ENCODE measurements at regions of chr10 and their contacts with region 1.

Region 1: DNA sequence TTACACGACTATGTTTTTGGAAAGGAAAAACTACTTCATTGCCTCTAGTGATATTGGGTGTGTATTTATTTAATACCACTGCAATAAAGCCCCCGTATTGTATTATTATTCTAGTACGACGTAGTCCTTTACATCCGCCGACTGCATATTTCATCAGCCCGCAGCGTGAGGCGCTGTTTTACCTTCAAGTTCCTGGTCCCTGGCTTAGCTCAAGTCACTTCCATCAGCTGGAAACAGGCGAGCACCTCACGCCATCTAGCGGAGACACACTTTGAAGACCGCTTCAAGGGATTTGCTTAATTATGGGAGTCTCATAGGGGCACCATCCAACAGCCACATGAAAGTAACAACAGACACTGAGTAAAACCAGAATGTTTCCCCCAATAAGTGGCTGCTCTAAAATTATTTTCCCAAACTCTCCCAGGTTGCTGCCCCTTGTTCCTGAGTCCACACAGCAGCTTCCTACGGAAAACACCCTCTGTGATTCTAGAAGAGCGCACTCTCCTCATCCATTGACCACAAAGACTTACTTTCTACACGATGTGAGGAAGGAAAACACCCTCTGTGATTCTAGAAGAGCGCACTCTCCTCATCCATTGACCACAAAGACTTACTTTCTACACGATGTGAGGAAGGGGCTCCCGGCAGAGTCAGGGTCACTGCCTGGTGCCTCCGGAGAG is 15.7 kb upstream of the ITIH2 start:
- DNase-seq: peak; percentile 55 to 89 (median 72)
- ATAC-seq: peak; percentile 94
- H3K4me3 ChIP-seq: no peak overlapping the region
- H3K4me3 Mint-ChIP-seq: no peak overlapping the region
- H3K27ac ChIP-seq: no peak overlapping the region
- H3K27ac Mint-ChIP-seq: no peak overlapping the region
- H3K4me1 ChIP-seq: no peaks in the 10 kb centered on the region
- H3K4me1 Mint-ChIP-seq: peaks cover 4% of the 10 kb centered on the region
- H3K27me3 ChIP-seq: no peaks in the 10 kb centered on the region
- H3K27me3 Mint-ChIP-seq: peaks cover 4% of the 10 kb centered on the region
- CTCF ChIP-seq: peak; percentile 69

Region 2: GRCh38 chr10:7121154-7121810 is 566.1 kb before region 1 on chr10:
- CTCF ChIA-PET with region 1: interaction called, 13 read pairs
- POLR2A ChIA-PET with region 1: no interaction called
- intact Hi-C with region 1: loop called in 1 of 2 experiments (anchors 1 kb)
- DNase-seq: peak; percentile 57 to 91 (median 78)
- ATAC-seq: peak; percentile 95
- H3K4me3 ChIP-seq: no peak overlapping the region
- H3K4me3 Mint-ChIP-seq: no peak overlapping the region
- H3K27ac ChIP-seq: no peak overlapping the region
- H3K27ac Mint-ChIP-seq: peak overlapping the region; percentile 69
- H3K4me1 ChIP-seq: peaks cover 4% of the 10 kb centered on the region
- H3K4me1 Mint-ChIP-seq: peaks cover 6% of the 10 kb centered on the region
- H3K27me3 ChIP-seq: no peaks in the 10 kb centered on the region
- H3K27me3 Mint-ChIP-seq: no peaks in the 10 kb centered on the region
- CTCF ChIP-seq: peak; percentile 61

Region 3: DNA sequence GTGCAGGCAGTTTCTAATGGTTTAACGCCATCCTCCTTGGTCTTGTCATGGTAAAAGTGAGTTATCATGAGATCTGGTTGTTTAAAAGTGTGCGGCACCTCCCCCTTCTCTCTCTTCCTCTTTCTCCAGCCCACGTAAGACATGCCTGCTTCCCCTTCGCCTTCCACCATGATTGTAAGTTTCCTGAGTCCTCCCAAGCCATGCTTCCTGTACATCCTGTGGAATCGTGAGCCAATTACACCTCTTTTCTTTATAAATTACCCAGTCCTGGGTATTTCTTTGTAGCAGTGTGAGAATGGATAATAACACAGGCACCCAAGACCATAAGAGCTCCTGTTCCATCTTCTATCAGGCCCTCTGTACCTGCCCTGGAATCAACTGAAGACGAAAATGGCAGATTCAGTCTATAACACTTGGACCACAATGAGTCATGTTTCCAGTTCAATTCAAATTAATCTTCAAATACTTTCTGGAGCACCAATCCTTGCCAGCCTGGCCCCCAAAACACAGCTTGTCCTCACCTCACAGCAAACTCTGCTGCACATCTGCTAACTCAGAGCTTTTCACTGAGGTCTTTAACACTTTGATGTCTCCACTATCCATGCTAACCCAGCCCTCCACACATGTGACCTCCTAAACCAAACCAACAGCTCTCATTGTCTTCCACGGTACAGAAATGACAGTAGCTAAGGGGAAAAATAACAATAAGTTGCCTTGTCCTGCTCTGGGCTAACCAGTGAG is 349.8 kb before region 1 on chr10:
- CTCF ChIA-PET with region 1: no interaction called
- POLR2A ChIA-PET with region 1: no interaction called
- intact Hi-C with region 1: no loop called
- DNase-seq: no peak
- ATAC-seq: peak; percentile 42
- H3K4me3 ChIP-seq: no peak overlapping the region
- H3K4me3 Mint-ChIP-seq: no peak overlapping the region
- H3K27ac ChIP-seq: peak overlapping the region in 1 of 2 experiments; percentile 4
- H3K27ac Mint-ChIP-seq: no peak overlapping the region
- H3K4me1 ChIP-seq: peaks cover 5% of the 10 kb centered on the region
- H3K4me1 Mint-ChIP-seq: peaks cover 67% of the 10 kb centered on the region
- H3K27me3 ChIP-seq: no peaks in the 10 kb centered on the region
- H3K27me3 Mint-ChIP-seq: no peaks in the 10 kb centered on the region
- CTCF ChIP-seq: no peak

Region 4: GRCh38 chr10:7424315-7424714 is 263.1 kb before region 1 on chr10:
- CTCF ChIA-PET with region 1: interaction called, 47 read pairs
- POLR2A ChIA-PET with region 1: interaction called, 4 read pairs
- intact Hi-C with region 1: loop called (anchors 1 to 5 kb)
- DNase-seq: peak in 6 of 9 experiments; percentile 26 to 70 (median 58)
- ATAC-seq: peak; percentile 91
- H3K4me3 ChIP-seq: no peak overlapping the region
- H3K4me3 Mint-ChIP-seq: no peak overlapping the region
- H3K27ac ChIP-seq: no peak overlapping the region
- H3K27ac Mint-ChIP-seq: peak overlapping the region; percentile 49
- H3K4me1 ChIP-seq: no peaks in the 10 kb centered on the region
- H3K4me1 Mint-ChIP-seq: peaks cover 24% of the 10 kb centered on the region
- H3K27me3 ChIP-seq: no peaks in the 10 kb centered on the region
- H3K27me3 Mint-ChIP-seq: no peaks in the 10 kb centered on the region
- CTCF ChIP-seq: no peak

Region 5: DNA sequence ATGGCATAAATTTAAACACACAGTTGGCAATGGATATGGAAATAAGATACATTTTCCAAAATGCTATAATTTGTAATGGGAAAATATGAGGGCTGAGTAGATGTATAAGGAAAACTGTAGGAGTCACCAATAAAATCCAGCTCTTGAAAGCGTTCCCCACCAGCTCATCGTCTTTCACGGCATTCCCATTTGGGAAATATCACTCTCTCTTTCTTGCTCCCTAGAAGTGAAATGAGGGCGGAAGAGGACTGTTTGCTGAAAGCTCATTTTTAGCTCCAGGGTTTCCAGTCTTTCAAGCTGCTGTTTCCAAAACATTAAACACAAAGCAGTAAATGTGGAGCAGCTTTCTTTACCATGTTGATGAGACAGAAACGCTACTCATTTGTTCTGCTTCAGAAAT is 171.9 kb before region 1 on chr10:
- CTCF ChIA-PET with region 1: interaction called, 15 read pairs
- POLR2A ChIA-PET with region 1: no interaction called
- intact Hi-C with region 1: no loop called
- DNase-seq: no peak
- ATAC-seq: no peak
- H3K4me3 ChIP-seq: no peak overlapping the region
- H3K4me3 Mint-ChIP-seq: no peak overlapping the region
- H3K27ac ChIP-seq: no peak overlapping the region
- H3K27ac Mint-ChIP-seq: no peak overlapping the region
- H3K4me1 ChIP-seq: peaks cover 25% of the 10 kb centered on the region
- H3K4me1 Mint-ChIP-seq: peaks cover 39% of the 10 kb centered on the region
- H3K27me3 ChIP-seq: no peaks in the 10 kb centered on the region
- H3K27me3 Mint-ChIP-seq: no peaks in the 10 kb centered on the region
- CTCF ChIP-seq: no peak

Region 6: DNA sequence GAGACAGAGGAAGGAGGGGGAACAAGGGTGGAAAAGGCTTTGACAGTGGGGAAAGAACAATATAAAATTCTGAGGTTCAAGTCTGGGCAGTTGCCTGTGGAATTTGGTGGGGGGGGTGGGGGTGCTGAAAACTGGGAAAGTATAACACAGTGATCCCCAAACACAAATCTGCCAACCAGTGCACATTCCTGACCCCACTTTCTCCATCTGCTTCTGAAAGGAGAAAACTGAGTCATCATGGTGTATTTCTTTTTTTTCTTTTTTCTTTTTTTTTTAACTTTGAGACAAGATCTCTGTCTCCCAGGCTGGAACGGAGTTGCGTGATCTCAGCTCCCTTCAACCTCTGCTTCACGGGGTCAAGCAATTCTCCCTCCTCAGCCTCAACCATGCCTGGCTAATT is 16.2 kb before region 1 on chr10:
- CTCF ChIA-PET with region 1: interaction called, 19 read pairs
- POLR2A ChIA-PET with region 1: no interaction called
- intact Hi-C with region 1: no loop called
- DNase-seq: no peak
- ATAC-seq: no peak
- H3K4me3 ChIP-seq: no peak overlapping the region
- H3K4me3 Mint-ChIP-seq: no peak overlapping the region
- H3K27ac ChIP-seq: no peak overlapping the region
- H3K27ac Mint-ChIP-seq: no peak overlapping the region
- H3K4me1 ChIP-seq: peaks cover 7% of the 10 kb centered on the region
- H3K4me1 Mint-ChIP-seq: peaks cover 12% of the 10 kb centered on the region
- H3K27me3 ChIP-seq: peaks cover 4 to 12% of the 10 kb centered on the region in 2 experiments
- H3K27me3 Mint-ChIP-seq: peaks cover 51% of the 10 kb centered on the region
- CTCF ChIP-seq: no peak

Region 7: GRCh38 chr10:7722927-7723529 is 35.7 kb after region 1 on chr10:
- CTCF ChIA-PET with region 1: no interaction called
- POLR2A ChIA-PET with region 1: no interaction called
- intact Hi-C with region 1: no loop called
- DNase-seq: no peak
- ATAC-seq: no peak
- H3K4me3 ChIP-seq: no peak overlapping the region
- H3K4me3 Mint-ChIP-seq: no peak overlapping the region
- H3K27ac ChIP-seq: no peak overlapping the region
- H3K27ac Mint-ChIP-seq: no peak overlapping the region
- H3K4me1 ChIP-seq: no peaks in the 10 kb centered on the region
- H3K4me1 Mint-ChIP-seq: peaks cover 1% of the 10 kb centered on the region
- H3K27me3 ChIP-seq: no peaks in the 10 kb centered on the region
- H3K27me3 Mint-ChIP-seq: peaks cover 12% of the 10 kb centered on the region
- CTCF ChIP-seq: no peak

Region 8: DNA sequence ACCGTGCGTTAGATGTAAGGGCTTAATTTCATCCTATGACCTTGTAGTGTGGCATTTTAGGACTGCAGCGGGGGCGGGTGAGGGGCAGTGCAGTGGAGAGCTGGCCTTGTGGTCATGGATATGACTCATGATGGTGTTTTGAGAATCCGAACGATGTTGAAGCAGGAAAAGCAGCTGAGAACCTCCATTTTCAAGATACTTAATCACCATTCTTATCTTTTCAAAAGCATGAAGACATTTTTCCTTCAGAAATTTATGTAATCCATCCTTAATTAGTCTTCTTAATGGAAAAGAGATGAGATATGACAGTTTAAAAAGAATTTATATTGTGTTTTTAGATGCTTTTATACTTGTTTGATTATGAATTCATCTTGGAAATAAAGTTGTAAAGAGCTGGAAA is 110.2 kb after region 1 on chr10:
- CTCF ChIA-PET with region 1: no interaction called
- POLR2A ChIA-PET with region 1: no interaction called
- intact Hi-C with region 1: no loop called
- DNase-seq: no peak
- ATAC-seq: no peak
- H3K4me3 ChIP-seq: no peak overlapping the region
- H3K4me3 Mint-ChIP-seq: no peak overlapping the region
- H3K27ac ChIP-seq: no peak overlapping the region
- H3K27ac Mint-ChIP-seq: no peak overlapping the region
- H3K4me1 ChIP-seq: peaks cover 9% of the 10 kb centered on the region
- H3K4me1 Mint-ChIP-seq: peaks cover 39% of the 10 kb centered on the region
- H3K27me3 ChIP-seq: no peaks in the 10 kb centered on the region
- H3K27me3 Mint-ChIP-seq: no peaks in the 10 kb centered on the region
- CTCF ChIP-seq: no peak

Region 9: GRCh38 chr10:8102708-8103401 is 415.5 kb after region 1 on chr10:
- CTCF ChIA-PET with region 1: no interaction called
- POLR2A ChIA-PET with region 1: no interaction called
- intact Hi-C with region 1: no loop called
- DNase-seq: peak in 3 of 9 experiments; percentile 20 to 43 (median 23)
- ATAC-seq: no peak
- H3K4me3 ChIP-seq: no peak overlapping the region
- H3K4me3 Mint-ChIP-seq: no peak overlapping the region
- H3K27ac ChIP-seq: no peak overlapping the region
- H3K27ac Mint-ChIP-seq: no peak overlapping the region
- H3K4me1 ChIP-seq: no peaks in the 10 kb centered on the region
- H3K4me1 Mint-ChIP-seq: peaks cover 3% of the 10 kb centered on the region
- H3K27me3 ChIP-seq: no peaks in the 10 kb centered on the region
- H3K27me3 Mint-ChIP-seq: no peaks in the 10 kb centered on the region
- CTCF ChIP-seq: no peak

Measured in CD8-positive, alpha-beta T cell (primary cell).